K562 (cell line): ENCODE measurements at regions of chr6 and their contacts with region 1.

Region 1: DNA sequence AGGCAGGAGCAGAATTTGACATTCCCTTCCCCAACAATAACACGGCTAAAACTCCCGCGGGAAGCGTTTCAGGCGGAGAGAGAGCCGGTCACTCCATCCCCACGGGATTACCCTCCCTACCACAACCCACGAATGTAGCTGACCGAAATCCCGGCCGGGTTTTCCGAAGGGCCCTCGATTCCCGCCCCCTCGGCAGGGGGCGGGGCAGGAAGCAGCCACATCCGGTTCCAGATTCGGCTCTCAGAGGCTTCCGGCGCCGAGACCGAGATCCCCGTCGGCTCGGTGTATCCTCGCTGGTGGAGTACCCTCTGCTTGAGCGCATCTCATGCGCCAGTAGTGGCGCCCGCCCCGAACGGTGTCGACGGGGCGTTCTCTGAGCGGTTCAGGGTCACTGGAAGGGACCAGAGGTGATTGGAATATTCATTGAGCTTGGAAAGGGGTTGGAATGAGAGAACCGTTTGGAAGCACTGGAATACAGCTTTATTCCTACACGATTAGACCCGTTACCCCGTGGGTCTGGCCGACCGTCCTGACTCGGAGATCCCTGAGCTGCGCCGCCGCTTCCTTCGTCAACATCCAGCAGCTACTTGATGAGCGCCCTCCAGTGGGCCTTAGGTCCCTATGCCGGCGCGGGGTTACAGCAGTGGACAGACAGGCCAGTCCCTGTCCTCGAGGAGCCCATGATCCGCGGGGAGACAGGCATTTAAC is 649 bp upstream of the RGL2 start:
- DNase-seq: peak; percentile 90 to 98 (median 92)
- ATAC-seq: peak; percentile 84
- H3K4me3 ChIP-seq: peak overlapping the region; percentile 64
- H3K27ac ChIP-seq: peak overlapping the region; percentile 94
- H3K4me1 ChIP-seq: peaks cover 11 to 44% of the 10 kb centered on the region in 2 experiments
- H3K27me3 ChIP-seq: no peaks in the 10 kb centered on the region
- CTCF ChIP-seq: peak; percentile 89 to 97 (median 97)
- EP300 ChIP-seq: peak; percentile 46
- POLR2A ChIP-seq: peak; percentile 99
- RAD21 ChIP-seq: peak; percentile 68 to 69

Region 2: GRCh38 chr6:32894080-32895005 is 405.0 kb before region 1 on chr6:
- CTCF ChIA-PET with region 1: no interaction called
- POLR2A ChIA-PET with region 1: no interaction called
- in situ Hi-C with region 1: no loop called
- intact Hi-C with region 1: no loop called
- DNase-seq: peak; percentile 32 to 83 (median 78)
- ATAC-seq: peak; percentile 91
- H3K4me3 ChIP-seq: no peak overlapping the region
- H3K27ac ChIP-seq: no peak overlapping the region
- H3K4me1 ChIP-seq: peaks cover 0 to 8% of the 10 kb centered on the region in 2 experiments; a peak in 2 of 5 replicates
- H3K27me3 ChIP-seq: peaks cover 40 to 41% of the 10 kb centered on the region in 2 experiments
- CTCF ChIP-seq: no peak
- EP300 ChIP-seq: no peak
- POLR2A ChIP-seq: no peak
- RAD21 ChIP-seq: no peak

Region 3: GRCh38 chr6:33217681-33218080 is 81.7 kb before region 1 on chr6:
- CTCF ChIA-PET with region 1: no interaction called
- POLR2A ChIA-PET with region 1: no interaction called
- in situ Hi-C with region 1: no loop called
- intact Hi-C with region 1: no loop called
- DNase-seq: peak in 3 of 4 experiments; percentile 5 to 6 (median 5)
- ATAC-seq: no peak
- H3K4me3 ChIP-seq: no peak overlapping the region
- H3K27ac ChIP-seq: no peak overlapping the region
- H3K4me1 ChIP-seq: peaks cover 0 to 22% of the 10 kb centered on the region in 2 experiments; a peak in 2 of 5 replicates
- H3K27me3 ChIP-seq: peaks cover 7 to 15% of the 10 kb centered on the region in 2 experiments; a peak in 4 of 5 replicates
- CTCF ChIP-seq: no peak
- EP300 ChIP-seq: no peak
- POLR2A ChIP-seq: no peak
- RAD21 ChIP-seq: no peak

Region 4: GRCh38 chr6:33288921-33289748 is 10.3 kb before region 1 on chr6 and contains the starts of genes PFDN6 and WDR46:
- CTCF ChIA-PET with region 1: no interaction called
- POLR2A ChIA-PET with region 1: interaction called, 16 read pairs
- in situ Hi-C with region 1: no loop called
- intact Hi-C with region 1: no loop called
- DNase-seq: peak; percentile 89 to 97 (median 92)
- ATAC-seq: peak; percentile 97
- H3K4me3 ChIP-seq: peak within 1 kb of the TSS; percentile 76
- H3K27ac ChIP-seq: peak within 1 kb of the TSS; percentile 83
- H3K4me1 ChIP-seq: peaks cover 13 to 24% of the 10 kb centered on the region in 2 experiments; a peak in 4 of 5 replicates
- H3K27me3 ChIP-seq: no peaks in the 10 kb centered on the region
- CTCF ChIP-seq: no peak
- EP300 ChIP-seq: no peak; the same call in 1 of the 2 replicates
- POLR2A ChIP-seq: peak; percentile 89
- RAD21 ChIP-seq: no peak
- polyA plus RNA-seq, gene PFDN6: 6.8 to 8.7 TPM
- polyA plus RNA-seq, gene WDR46: 8.9 to 27.6 TPM

Region 5: DNA sequence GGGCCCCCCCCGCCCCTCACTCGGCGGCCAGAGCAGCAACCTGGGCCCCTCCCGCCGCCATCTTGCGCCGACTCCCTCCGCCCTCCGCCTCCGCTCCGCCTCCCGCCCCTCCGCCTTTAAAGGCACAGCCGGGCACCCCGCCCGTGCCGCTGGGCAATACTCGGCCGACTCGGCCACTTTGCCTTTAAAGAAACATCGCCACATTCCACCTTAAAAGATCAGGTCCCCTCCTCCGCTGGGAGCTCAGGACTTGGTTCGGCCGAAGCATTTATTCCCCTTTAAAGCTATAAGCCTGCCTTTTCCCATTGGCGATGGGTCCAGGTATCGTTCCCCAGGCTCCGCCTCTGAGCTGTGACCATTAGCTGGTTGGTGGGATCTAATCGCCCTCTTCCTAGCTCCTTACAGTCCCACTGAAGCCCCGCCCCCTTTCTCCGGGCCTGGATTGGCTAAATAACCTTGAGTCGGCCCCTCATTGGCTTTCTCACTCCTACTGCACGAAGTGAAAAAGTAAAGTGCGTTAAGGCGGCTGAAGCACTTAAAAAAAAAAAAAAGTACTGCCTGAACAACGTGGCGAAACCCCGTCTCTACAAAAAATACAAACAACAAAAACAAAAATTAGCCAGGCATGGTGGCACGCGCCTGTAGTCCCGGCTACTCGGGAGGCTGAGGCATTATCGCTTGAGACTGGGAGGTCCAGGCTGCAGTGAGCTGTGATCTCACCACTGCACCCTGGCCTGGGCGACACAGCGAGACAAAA is 18.5 kb after region 1 on chr6 and contains the start of gene ZBTB22:
- CTCF ChIA-PET with region 1: no interaction called
- POLR2A ChIA-PET with region 1: interaction called, 36 read pairs
- in situ Hi-C with region 1: no loop called
- intact Hi-C with region 1: loop called (anchors 1 kb)
- DNase-seq: peak; percentile 90 to 100 (median 94)
- ATAC-seq: peak; percentile 82
- H3K4me3 ChIP-seq: peak within 1 kb of the TSS; percentile 63
- H3K27ac ChIP-seq: peak within 1 kb of the TSS; percentile 79
- H3K4me1 ChIP-seq: peaks cover 56 to 76% of the 10 kb centered on the region in 2 experiments
- H3K27me3 ChIP-seq: no peaks in the 10 kb centered on the region
- CTCF ChIP-seq: peak in 1 of 3 experiments; percentile 17; a peak in 1 of 6 replicates
- EP300 ChIP-seq: no peak
- POLR2A ChIP-seq: peak; percentile 72
- RAD21 ChIP-seq: no peak
- polyA plus RNA-seq, gene ZBTB22: 0.21 to 0.30 TPM

Region 6: DNA sequence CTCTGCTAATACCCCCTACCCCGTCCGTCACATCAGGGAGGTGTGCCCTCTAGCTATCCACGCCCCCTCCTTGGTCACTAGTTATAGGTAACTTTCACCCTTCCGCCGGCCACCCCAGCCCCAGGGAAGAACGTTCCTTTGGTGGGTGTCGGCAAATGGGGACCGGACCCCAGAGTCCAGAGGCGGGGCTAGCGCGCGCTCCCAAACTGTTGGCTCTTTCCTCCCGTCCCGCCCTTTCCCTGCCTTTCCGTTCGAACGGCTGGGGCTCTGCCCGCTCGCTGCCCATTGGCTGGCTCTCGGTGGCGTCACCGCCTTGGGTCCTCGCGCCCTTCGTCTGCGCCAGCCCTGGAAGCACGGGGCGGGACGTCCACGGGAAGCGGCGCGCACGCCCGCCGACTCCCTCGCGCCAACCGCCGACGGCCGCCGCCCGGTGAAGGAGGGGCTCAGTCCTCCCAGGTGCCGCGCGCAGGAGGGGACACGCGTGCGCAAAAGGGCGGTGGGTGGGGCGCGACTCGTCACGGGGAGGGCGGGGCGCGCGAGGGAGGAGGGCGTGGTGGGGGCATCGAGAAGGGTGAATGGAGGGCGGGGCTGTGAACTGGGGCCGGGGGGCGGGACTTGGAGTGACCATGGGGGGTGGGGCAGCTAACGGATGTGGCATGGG is 110.8 kb after region 1 on chr6:
- CTCF ChIA-PET with region 1: no interaction called
- POLR2A ChIA-PET with region 1: interaction called, 7 read pairs
- in situ Hi-C with region 1: no loop called
- intact Hi-C with region 1: loop called (anchors 5 kb)
- DNase-seq: peak; percentile 97 to 99 (median 98)
- ATAC-seq: peak; percentile 96
- H3K4me3 ChIP-seq: peak overlapping the region; percentile 95
- H3K27ac ChIP-seq: peak overlapping the region; percentile 93
- H3K4me1 ChIP-seq: peaks cover 11 to 27% of the 10 kb centered on the region in 2 experiments; a peak in 4 of 5 replicates
- H3K27me3 ChIP-seq: no peaks in the 10 kb centered on the region
- CTCF ChIP-seq: 0 out of 6 replicates have a peak, but pooled peaks of 1 of the 3 experiments have one; percentile 1
- EP300 ChIP-seq: peak; percentile 43
- POLR2A ChIP-seq: peak; percentile 90
- RAD21 ChIP-seq: 0 out of 4 replicates have a peak, but pooled peaks of 1 of the 2 experiments have one; percentile 8